Panc1 (cell line): ENCODE measurements at regions of chr22 and their contacts with region 1.

Region 1: GRCh38 chr22:28541137-28541536 is 138.5 kb downstream of the TTC28 start:
- DNase-seq: no peak
- ATAC-seq: no peak
- H3K4me3 ChIP-seq: no peak overlapping the region
- H3K27ac ChIP-seq: no peak overlapping the region
- H3K4me1 ChIP-seq: no peaks in the 10 kb centered on the region
- H3K27me3 ChIP-seq: no peaks in the 10 kb centered on the region
- CTCF ChIP-seq: no peak

Region 2: DNA sequence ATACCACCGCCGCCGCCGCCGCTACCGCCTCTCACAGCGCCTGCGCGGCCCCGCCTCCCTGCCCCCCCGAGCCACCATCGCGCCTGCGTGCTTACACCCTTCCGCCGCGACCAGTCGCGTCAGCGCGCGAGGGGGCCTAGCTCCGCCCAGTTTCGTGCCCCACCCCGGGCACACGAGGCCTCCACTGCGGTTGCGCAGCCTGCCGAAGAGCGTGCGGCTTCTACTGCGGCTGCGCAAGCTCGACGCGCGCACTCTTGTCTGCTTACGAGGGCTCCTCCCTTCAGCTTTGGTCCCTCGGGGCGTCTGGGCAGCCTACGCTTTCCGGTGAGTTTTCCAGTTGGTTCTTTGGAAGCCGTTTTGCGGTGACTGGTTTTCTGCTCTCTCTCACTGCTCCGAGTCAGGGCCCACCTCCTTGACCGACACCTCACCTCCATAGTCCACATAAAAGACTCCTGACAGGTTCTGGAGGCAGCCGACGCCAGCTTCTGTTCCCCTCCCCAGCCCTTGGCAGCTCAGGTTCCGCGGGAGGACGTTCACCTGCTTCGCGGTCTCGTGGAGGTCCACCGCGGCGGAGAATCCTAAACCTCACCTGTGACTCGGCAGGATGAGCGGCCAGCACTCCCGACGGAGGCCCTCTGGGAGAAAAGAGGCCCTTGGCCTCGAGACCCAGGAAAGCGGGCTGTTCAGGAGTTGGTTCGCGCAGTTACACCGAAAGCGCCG is 621.8 kb before region 1 on chr22 and contains the start of gene PITPNB:
- CTCF ChIA-PET with region 1: no interaction called
- POLR2A ChIA-PET with region 1: interaction called, 11 read pairs
- in situ Hi-C with region 1: no loop called
- intact Hi-C with region 1: no loop called
- DNase-seq: peak; percentile 61
- ATAC-seq: peak; percentile 96
- H3K4me3 ChIP-seq: peak within 1 kb of the TSS; percentile 92 to 93
- H3K27ac ChIP-seq: peak within 1 kb of the TSS; percentile 88
- H3K4me1 ChIP-seq: peaks cover 25% of the 10 kb centered on the region
- H3K27me3 ChIP-seq: no peaks in the 10 kb centered on the region
- CTCF ChIP-seq: no peak
- total RNA-seq, gene PITPNB: 67.0 TPM

Region 3: DNA sequence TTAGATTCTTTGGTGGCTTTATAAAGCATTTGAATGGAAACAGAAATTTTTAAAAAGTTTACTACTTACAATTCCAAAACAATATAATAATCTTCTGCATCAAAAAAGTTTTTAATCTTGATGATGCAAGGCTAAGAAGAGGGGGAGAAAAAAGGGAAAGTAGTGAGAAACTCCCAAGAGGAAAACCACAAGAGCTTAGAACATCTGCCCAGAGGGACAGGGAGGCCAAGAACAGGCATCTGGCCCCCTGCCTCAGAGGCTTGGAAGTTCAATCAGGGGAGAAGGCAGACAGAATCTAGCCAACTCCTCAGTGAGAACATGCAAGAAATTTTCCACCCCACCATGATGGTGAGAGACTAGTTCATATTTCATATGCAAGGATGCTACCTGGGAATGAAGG is 162.3 kb after region 1 on chr22:
- CTCF ChIA-PET with region 1: no interaction called
- POLR2A ChIA-PET with region 1: no interaction called
- in situ Hi-C with region 1: no loop called
- intact Hi-C with region 1: no loop called
- DNase-seq: no peak
- ATAC-seq: no peak
- H3K4me3 ChIP-seq: no peak overlapping the region
- H3K27ac ChIP-seq: no peak overlapping the region
- H3K4me1 ChIP-seq: no peaks in the 10 kb centered on the region
- H3K27me3 ChIP-seq: no peaks in the 10 kb centered on the region
- CTCF ChIP-seq: no peak